Activated CD8-positive, alpha-beta memory T cell treated with anti-CD3 and anti-CD28 coated beads, Interleukin-2, amount 10 ng/mL, durations not matched to agents 7 days and 5 days (primary cell): ENCODE measurements at regions of chr15 and their contacts with region 1.

Region 1: GRCh38 chr15:64651573-64652260 is 123.7 kb downstream of the RBPMS2 start:
- DNase-seq: peak; percentile 48
- ATAC-seq: peak; percentile 78
- H3K4me3 Mint-ChIP-seq: no peak overlapping the region
- H3K27ac Mint-ChIP-seq: peak overlapping the region; percentile 76
- H3K4me1 Mint-ChIP-seq: peaks cover 21% of the 10 kb centered on the region
- H3K27me3 Mint-ChIP-seq: no peaks in the 10 kb centered on the region

Region 2: DNA sequence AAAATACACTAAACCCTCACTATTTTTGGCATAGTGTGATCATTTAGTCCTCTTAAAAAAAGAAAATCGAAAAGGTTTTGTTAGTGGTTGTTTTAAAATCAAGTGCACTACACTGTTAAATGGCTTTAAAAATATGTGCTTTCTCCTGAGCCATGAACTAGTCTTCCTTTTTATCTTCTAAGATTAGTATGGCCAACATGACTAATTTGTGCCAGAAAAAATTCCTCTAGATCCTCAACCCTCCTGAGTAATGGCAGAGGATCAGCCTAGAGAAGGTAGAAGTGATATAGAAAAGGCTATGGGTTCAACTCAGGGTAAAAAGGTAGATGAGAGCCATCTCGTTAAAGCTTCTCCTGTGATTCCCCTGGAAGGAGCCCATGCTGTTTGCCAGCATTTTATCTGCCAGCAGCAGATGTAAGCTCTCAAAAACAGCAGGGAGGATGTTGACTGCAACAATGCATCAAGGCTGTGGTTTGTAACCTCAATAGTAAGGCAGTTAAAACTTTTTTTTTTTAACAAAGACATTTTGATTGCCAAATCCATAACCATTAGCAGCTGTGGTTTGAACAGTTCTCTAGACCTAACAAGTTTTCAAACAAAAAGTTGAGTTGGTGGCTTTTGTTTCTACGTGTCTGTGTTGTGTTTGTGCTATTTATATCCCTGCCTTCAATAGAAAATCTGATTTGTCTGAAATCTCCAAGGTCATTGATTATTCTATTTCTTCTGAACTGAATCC is 221.5 kb before region 1 on chr15:
- CTCF ChIA-PET with region 1: interaction called, 34 read pairs
- DNase-seq: peak; percentile 72
- ATAC-seq: peak; percentile 83
- H3K4me3 Mint-ChIP-seq: peak overlapping the region; percentile 63
- H3K27ac Mint-ChIP-seq: peak overlapping the region; percentile 89
- H3K4me1 Mint-ChIP-seq: peaks cover 29% of the 10 kb centered on the region
- H3K27me3 Mint-ChIP-seq: no peaks in the 10 kb centered on the region

Region 3: DNA sequence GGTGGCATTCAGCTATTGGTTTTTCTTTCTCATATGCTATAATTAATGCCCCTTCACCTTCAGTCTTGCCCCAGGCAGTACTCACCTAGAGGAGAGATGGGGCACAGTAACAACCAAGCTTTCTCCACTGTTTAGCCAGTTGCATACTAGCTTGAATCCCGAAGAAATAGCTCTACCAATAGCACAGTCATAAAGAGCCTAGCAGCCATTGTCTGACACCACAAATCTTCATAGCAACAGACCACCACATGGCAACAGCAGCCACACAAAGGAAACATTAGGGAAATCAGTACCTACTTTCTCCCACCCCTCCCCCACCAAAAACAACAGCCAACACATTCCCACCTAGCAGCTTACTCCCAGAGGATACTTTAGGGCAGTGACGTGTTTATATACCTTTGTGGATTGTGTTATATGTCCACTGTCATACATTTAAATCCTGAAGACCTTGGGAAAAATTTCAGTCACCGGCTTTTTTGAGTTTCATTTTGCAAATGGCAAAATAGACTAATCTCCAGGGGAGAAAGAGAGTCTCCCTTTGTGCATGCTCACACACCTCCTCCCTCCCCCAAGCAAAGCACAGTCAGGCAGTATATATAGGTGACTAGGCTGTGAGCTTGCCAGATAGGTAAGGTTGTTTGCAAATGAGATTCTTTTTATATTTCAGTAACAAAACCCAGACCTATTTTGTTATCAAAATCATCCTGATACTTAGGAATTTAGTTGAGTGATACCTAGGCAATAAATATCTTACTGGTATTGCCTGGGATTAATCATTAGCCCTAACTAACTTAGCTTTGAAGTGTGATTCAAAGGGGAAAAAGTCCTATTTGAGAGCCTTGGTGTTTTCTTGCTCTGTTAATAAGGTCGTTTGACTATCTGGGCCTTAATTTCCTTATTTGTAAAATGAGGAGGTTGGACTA is 16.9 kb before region 1 on chr15:
- CTCF ChIA-PET with region 1: interaction called, 30 read pairs
- DNase-seq: peak; percentile 88
- ATAC-seq: peak; percentile 81
- H3K4me3 Mint-ChIP-seq: peak overlapping the region; percentile 62
- H3K27ac Mint-ChIP-seq: peak overlapping the region; percentile 77
- H3K4me1 Mint-ChIP-seq: peaks cover 66% of the 10 kb centered on the region
- H3K27me3 Mint-ChIP-seq: no peaks in the 10 kb centered on the region

Region 4: GRCh38 chr15:64678126-64678819 is 26.6 kb after region 1 on chr15:
- CTCF ChIA-PET with region 1: no interaction called
- DNase-seq: no peak
- ATAC-seq: no peak
- H3K4me3 Mint-ChIP-seq: no peak overlapping the region
- H3K27ac Mint-ChIP-seq: peak overlapping the region; percentile 17
- H3K4me1 Mint-ChIP-seq: no peaks in the 10 kb centered on the region
- H3K27me3 Mint-ChIP-seq: no peaks in the 10 kb centered on the region